ENCODE measurements at regions of chr6 and their contacts with region 1.

Region 1: DNA sequence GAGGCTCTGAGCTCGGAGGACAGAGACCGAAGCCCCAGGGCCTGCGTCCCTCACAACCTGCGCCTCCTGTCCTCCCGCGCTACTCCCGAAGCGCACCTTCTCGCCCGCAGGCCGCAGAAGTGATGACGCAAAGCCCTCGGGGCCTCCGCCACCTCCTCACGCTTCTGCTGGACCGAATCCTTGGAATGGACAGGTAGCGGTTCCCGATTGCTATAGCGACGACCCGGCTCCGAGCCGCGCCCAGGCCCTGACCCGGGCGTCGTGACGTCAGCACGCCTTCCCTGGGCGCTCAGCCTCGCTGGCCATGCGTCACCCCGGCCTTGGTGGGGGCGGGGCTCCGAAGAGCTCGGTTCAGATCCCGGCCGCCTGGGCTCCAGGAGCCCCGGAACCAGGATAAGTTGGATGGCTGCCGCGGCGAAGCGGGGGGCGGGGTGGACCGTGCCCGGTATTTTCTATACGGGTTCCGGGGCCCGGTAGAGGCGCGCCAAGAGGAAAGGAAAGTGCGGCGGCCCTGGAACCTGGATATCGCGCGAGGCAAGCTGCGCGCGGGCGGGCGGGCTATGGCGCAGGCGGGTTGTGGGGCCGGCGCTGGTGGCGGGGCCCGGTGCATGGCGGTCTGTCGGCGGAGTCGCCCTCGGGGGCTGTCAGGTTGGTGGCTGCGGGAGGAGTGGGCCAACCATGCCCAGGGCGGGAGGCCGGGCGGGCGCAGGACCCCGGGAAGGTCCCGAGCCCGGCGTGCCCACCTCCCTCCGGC is at the start of gene ZNF76:
- DNase-seq: peak; percentile 95
- ATAC-seq: peak; percentile 90
- H3K4me3 ChIP-seq: peak within 1 kb of the TSS; percentile 64
- H3K27ac ChIP-seq: peak within 1 kb of the TSS; percentile 66
- H3K4me1 ChIP-seq: peaks cover 8% of the 10 kb centered on the region; the same call in 1 of the 2 replicates
- H3K27me3 ChIP-seq: no peaks in the 10 kb centered on the region
- CTCF ChIP-seq: no peak
- POLR2A ChIP-seq: peak; percentile 58; the same call in 1 of the 2 replicates
- RAD21 ChIP-seq: no peak
- total RNA-seq, gene ZNF76: 15.3 and 19.9 TPM in 2 replicates

Region 2: DNA sequence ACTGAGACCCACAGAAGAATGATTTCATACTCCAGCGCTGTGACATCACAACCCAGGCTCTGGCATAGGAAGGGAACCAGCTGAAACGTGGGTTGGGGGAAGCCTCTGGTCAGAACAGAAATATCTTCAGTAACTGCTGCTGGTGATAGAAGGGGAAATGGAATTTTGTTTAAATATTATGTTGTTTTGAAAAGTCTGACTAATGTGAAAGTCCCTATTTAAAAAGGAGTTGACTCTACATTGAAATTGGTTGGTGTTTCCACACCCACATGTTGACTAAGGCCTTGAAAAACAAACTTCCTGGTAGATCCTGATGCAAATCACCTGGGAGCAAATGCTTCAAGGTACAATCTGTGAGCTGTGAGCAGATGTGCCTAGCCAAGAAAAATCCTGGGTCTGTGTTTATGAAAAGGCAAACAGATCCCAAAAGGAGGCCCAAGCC is 93.7 kb before region 1 on chr6:
- CTCF ChIA-PET with region 1: no interaction called
- POLR2A ChIA-PET with region 1: no interaction called
- dilution Hi-C with region 1: no loop called
- in situ Hi-C with region 1: no loop called
- intact Hi-C with region 1: no loop called
- DNase-seq: peak; percentile 87
- ATAC-seq: peak; percentile 74
- H3K4me3 ChIP-seq: no peak overlapping the region
- H3K27ac ChIP-seq: peak overlapping the region; percentile 16
- H3K4me1 ChIP-seq: peaks cover 23% of the 10 kb centered on the region
- H3K27me3 ChIP-seq: no peaks in the 10 kb centered on the region; the same call in 1 of the 2 replicates
- CTCF ChIP-seq: no peak
- POLR2A ChIP-seq: no peak
- RAD21 ChIP-seq: no peak; the same call in 1 of the 2 replicates

Region 3: GRCh38 chr6:35240840-35241801 is 18.2 kb before region 1 on chr6:
- CTCF ChIA-PET with region 1: interaction called, 5 read pairs
- POLR2A ChIA-PET with region 1: interaction called, 13 read pairs
- dilution Hi-C with region 1: no loop called
- in situ Hi-C with region 1: no loop called
- intact Hi-C with region 1: no loop called
- DNase-seq: peak; percentile 44
- ATAC-seq: peak; percentile 87
- H3K4me3 ChIP-seq: no peak overlapping the region
- H3K27ac ChIP-seq: no peak overlapping the region
- H3K4me1 ChIP-seq: peaks cover 5% of the 10 kb centered on the region; the same call in 1 of the 2 replicates
- H3K27me3 ChIP-seq: no peaks in the 10 kb centered on the region
- CTCF ChIP-seq: peak; percentile 94
- POLR2A ChIP-seq: no peak
- RAD21 ChIP-seq: peak; percentile 96

Region 4: DNA sequence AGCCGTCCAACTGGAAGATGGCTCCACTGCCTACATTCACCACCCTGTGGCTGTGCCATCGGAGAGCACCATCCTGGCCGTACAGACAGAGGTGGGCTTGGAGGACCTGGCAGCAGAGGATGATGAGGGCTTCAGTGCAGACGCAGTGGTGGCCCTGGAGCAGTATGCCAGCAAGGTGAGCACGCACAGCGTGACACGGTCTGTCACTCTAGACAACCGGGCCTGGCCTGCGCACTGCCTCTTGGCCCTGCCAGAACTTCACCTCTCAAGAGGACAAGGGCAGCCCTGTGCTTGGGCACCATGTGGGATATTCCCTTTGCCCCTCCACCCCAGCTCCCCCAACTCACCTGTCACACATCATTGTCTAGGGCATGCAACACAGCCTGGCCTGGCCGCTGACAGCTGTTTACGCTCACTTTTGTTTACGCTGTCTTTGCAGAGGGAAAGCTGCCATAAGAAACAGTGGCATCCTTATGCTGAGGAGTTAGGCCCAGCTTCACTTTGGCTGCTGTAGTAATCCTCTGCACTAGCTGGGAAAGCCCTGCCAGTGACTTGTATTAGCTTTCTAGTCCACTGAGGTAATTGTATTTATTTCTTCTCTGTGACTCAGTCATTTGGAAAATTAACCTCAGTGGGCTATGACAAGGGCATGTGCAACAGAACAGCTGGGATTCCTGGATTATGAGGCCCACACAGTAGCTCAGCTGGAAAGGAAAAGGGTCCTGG is 28.5 kb after region 1 on chr6:
- CTCF ChIA-PET with region 1: no interaction called
- POLR2A ChIA-PET with region 1: no interaction called
- dilution Hi-C with region 1: no loop called
- in situ Hi-C with region 1: no loop called
- intact Hi-C with region 1: loop called (anchors 1 kb)
- DNase-seq: peak; percentile 91
- ATAC-seq: peak; percentile 95
- H3K4me3 ChIP-seq: no peak overlapping the region
- H3K27ac ChIP-seq: peak overlapping the region; percentile 0; the same call in 1 of the 2 replicates
- H3K4me1 ChIP-seq: peaks cover 16% of the 10 kb centered on the region
- H3K27me3 ChIP-seq: no peaks in the 10 kb centered on the region
- CTCF ChIP-seq: no peak
- POLR2A ChIP-seq: no peak
- RAD21 ChIP-seq: no peak

Measured in IMR-90 (cell line).